Mucosa of descending colon (tissue), 3 donors: ENCODE measurements at regions of chr16 and their contacts with region 1.

Region 1: GRCh38 chr16:57899771-57900661 is 70.9 kb downstream of the CNGB1 start:
- DNase-seq: peak in 2 of 3 donors; percentile 80 to 90
- ATAC-seq: peak; percentile 76
- H3K4me3 ChIP-seq: no peak overlapping the region
- H3K4me1 ChIP-seq: no peaks in the 10 kb centered on the region
- CTCF ChIP-seq: peak; percentile 76

Region 2: DNA sequence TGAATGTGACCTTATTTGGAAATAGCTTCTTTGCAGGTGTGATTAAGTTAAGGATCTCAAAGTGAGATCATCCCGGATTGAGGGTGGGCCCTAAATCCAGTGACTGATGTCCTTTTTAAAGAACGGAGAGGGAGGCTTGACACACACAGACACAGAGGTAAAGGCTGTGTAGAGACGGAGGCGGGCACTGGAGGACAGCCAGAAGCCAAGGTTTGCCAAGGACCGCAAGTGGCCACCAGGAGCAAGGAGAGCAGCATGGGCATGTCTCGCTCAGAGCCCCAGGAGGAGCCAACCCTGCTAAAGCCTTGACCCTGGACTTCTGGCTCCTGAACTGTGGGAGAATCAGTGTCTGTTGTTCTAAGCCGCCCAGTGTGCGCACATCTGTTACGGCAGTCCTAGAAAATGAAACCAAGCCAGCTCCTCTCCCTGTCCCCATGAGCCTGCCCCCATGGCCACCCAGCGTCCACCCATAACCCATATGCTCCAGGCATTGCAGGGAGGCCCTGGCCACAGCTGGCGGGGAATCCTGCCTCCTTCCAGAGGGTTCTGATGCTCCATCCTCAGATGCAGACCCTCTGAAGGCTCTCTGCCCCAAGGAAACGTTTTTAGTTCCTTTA is 55.7 kb after region 1 on chr16:
- intact Hi-C with region 1: no loop called
- DNase-seq: peak in 1 of 3 donors; percentile 7
- ATAC-seq: no peak
- H3K4me3 ChIP-seq: no peak overlapping the region
- H3K4me1 ChIP-seq: no peaks in the 10 kb centered on the region
- CTCF ChIP-seq: no peak

Region 3: GRCh38 chr16:58000706-58001676 is 101.0 kb after region 1 on chr16 and contains the start of gene USB1:
- intact Hi-C with region 1: loop called (anchors 5 to 10 kb)
- DNase-seq: peak; percentile 88 to 92 (median 91)
- ATAC-seq: peak; percentile 93
- H3K4me3 ChIP-seq: peak within 1 kb of the TSS; percentile 46
- H3K4me1 ChIP-seq: peaks cover 11% of the 10 kb centered on the region
- CTCF ChIP-seq: peak; percentile 75
- total RNA-seq, gene USB1: 45.1 to 50.2 (median 47.4) TPM